GM12878 (cell line): ENCODE measurements at regions of chr19 and their contacts with region 1.

Region 1: DNA sequence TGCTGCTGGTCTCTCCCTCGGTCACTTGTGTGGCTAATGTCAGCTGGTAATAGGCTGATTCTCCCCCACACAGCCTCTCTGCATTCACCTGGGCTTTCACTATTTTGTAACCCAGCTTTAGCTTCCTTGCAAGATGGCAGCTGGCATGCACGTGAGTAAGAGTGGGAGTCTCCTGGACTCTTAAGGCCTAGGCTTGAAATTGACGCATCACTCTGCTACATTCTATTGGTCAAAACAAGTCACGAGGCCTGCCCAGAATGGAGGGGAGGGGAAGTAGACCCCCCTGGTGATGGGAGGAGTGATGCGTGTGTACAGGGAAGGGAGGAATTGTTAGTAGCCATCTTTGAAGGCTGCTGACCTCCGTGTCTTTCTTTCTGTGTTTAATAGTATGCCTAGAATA is 24.9 kb upstream of the PNMA8B start:
- DNase-seq: no peak
- ATAC-seq: no peak
- H3K4me3 ChIP-seq: no peak overlapping the region
- H3K27ac ChIP-seq: no peak overlapping the region
- H3K4me1 ChIP-seq: peaks cover 12% of the 10 kb centered on the region
- H3K27me3 ChIP-seq: no peaks in the 10 kb centered on the region
- CTCF ChIP-seq: no peak
- EP300 ChIP-seq: no peak
- POLR2A ChIP-seq: no peak
- RAD21 ChIP-seq: no peak

Region 2: GRCh38 chr19:45455707-45456499 is 1064.7 kb before region 1 on chr19:
- CTCF ChIA-PET with region 1: no interaction called
- POLR2A ChIA-PET with region 1: interaction called, 11 read pairs
- RAD21 ChIA-PET with region 1: no interaction called
- SMC1A ChIA-PET with region 1: no interaction called
- in situ Hi-C with region 1: no loop called
- intact Hi-C with region 1: no loop called
- DNase-seq: no peak
- ATAC-seq: peak; percentile 86
- H3K4me3 ChIP-seq: no peak overlapping the region
- H3K27ac ChIP-seq: peak overlapping the region; percentile 33
- H3K4me1 ChIP-seq: peaks cover 33% of the 10 kb centered on the region
- H3K27me3 ChIP-seq: no peaks in the 10 kb centered on the region
- CTCF ChIP-seq: no peak
- EP300 ChIP-seq: no peak
- POLR2A ChIP-seq: no peak
- RAD21 ChIP-seq: no peak

Region 3: DNA sequence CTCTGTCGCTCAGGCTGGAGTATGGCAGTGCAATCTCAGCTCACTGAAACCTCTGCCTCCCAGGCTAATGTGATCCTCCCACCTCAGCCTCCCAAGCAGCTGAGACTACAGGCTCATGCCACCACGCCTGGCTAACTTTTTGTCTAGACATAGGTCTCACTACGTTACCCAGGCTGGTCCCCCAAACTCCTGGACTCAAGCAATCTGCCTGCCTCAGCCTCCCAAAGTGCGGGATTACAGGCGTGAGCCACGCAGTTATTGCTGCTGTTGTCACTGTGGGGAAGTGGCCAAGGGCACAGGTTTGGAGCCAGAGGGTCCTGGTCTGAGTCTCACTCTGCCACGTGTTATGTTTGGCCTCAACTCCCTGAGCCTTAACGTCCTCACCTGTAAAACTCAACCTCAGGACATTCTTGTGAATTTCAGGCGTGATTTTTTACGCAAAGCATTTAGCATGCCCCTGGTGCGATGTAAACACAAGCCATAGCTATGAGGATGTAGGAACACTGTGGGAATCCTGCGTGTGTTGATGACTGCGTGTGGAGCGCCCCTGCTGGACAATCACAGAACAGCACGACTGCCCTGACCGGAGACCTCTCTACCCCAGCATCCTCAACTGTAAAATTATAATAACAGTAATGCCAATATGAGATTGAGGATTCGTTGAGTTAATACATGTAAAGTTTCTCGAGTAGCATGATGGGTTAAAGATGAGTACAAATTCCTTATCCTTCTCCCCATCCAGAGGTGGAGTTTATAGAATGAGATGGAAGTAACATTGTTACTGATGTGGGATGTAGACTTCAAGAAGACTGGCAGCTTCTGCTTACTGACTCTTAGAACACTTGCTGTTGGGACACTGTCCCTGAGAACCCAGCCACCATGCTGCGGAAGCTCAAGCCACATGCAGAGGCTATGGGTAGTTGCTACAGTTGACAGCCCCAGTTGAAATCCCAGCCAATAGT is 16.8 kb after region 1 on chr19:
- CTCF ChIA-PET with region 1: interaction called, 33 read pairs
- POLR2A ChIA-PET with region 1: no interaction called
- RAD21 ChIA-PET with region 1: no interaction called
- SMC1A ChIA-PET with region 1: interaction called, 5 read pairs
- in situ Hi-C with region 1: no loop called
- intact Hi-C with region 1: no loop called
- DNase-seq: no peak
- ATAC-seq: peak; percentile 85
- H3K4me3 ChIP-seq: no peak overlapping the region
- H3K27ac ChIP-seq: no peak overlapping the region
- H3K4me1 ChIP-seq: no peaks in the 10 kb centered on the region
- H3K27me3 ChIP-seq: no peaks in the 10 kb centered on the region; a peak in 3 of 4 replicates
- CTCF ChIP-seq: peak; percentile 74 to 96 (median 95)
- EP300 ChIP-seq: no peak
- POLR2A ChIP-seq: no peak
- RAD21 ChIP-seq: no peak

Region 4: GRCh38 chr19:46579361-46579879 is 58.8 kb after region 1 on chr19:
- CTCF ChIA-PET with region 1: no interaction called
- POLR2A ChIA-PET with region 1: no interaction called
- RAD21 ChIA-PET with region 1: no interaction called
- SMC1A ChIA-PET with region 1: no interaction called
- in situ Hi-C with region 1: no loop called
- intact Hi-C with region 1: no loop called
- DNase-seq: no peak
- ATAC-seq: no peak
- H3K4me3 ChIP-seq: no peak overlapping the region
- H3K27ac ChIP-seq: no peak overlapping the region
- H3K4me1 ChIP-seq: no peaks in the 10 kb centered on the region
- H3K27me3 ChIP-seq: no peaks in the 10 kb centered on the region
- CTCF ChIP-seq: no peak
- EP300 ChIP-seq: no peak
- POLR2A ChIP-seq: no peak
- RAD21 ChIP-seq: no peak